ENCODE measurements at regions of chr7 and their contacts with region 1.

Region 1: DNA sequence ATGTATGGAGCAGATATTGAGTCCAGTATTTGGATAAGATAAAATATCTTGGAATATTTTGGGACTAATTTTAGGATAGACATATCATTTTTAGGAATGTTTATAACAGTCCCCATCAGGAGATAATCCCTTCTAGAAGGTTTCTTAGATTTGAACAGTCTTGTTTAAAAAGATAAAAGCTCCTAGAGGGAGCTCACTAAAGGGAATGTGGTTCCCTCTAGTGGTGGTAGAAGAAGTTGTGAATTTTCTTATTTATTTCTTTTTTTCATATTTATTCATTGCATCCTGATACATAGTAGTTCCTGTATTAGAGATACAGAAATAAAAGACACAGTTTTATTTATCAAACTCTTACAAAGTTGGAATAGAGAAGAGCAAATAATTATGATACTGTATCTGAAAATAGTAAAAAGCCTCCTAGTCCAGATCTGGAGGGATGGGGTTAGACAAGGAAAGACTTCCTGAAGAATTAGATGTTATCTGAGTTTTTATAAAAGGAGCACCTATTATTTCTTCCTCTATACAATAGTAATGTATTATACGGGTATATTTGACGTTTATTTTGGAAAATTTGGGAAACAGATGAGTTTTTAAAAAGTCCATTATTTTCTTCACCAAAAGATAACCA is 24.5 kb upstream of the KLF14 start:
- DNase-seq: no peak
- ATAC-seq: peak; percentile 40
- H3K4me3 Mint-ChIP-seq: no peak overlapping the region
- H3K27ac Mint-ChIP-seq: no peak overlapping the region
- H3K4me1 Mint-ChIP-seq: no peaks in the 10 kb centered on the region
- H3K27me3 Mint-ChIP-seq: peaks cover 3% of the 10 kb centered on the region
- CTCF ChIP-seq: peak; percentile 47

Region 2: GRCh38 chr7:130242198-130243014 is 516.1 kb before region 1 on chr7:
- CTCF ChIA-PET with region 1: interaction called, 5 read pairs
- POLR2A ChIA-PET with region 1: no interaction called
- intact Hi-C with region 1: loop called (anchors 1 kb)
- DNase-seq: no peak
- ATAC-seq: no peak
- H3K4me3 Mint-ChIP-seq: no peak overlapping the region
- H3K27ac Mint-ChIP-seq: no peak overlapping the region
- H3K4me1 Mint-ChIP-seq: peaks cover 9% of the 10 kb centered on the region
- H3K27me3 Mint-ChIP-seq: peaks cover 5% of the 10 kb centered on the region
- CTCF ChIP-seq: no peak

Region 3: GRCh38 chr7:130560970-130561369 is 197.6 kb before region 1 on chr7:
- CTCF ChIA-PET with region 1: no interaction called
- POLR2A ChIA-PET with region 1: no interaction called
- intact Hi-C with region 1: loop called (anchors 5 kb)
- DNase-seq: no peak
- ATAC-seq: peak; percentile 77
- H3K4me3 Mint-ChIP-seq: no peak overlapping the region
- H3K27ac Mint-ChIP-seq: no peak overlapping the region
- H3K4me1 Mint-ChIP-seq: peaks cover 4% of the 10 kb centered on the region
- H3K27me3 Mint-ChIP-seq: no peaks in the 10 kb centered on the region
- CTCF ChIP-seq: no peak

Region 4: DNA sequence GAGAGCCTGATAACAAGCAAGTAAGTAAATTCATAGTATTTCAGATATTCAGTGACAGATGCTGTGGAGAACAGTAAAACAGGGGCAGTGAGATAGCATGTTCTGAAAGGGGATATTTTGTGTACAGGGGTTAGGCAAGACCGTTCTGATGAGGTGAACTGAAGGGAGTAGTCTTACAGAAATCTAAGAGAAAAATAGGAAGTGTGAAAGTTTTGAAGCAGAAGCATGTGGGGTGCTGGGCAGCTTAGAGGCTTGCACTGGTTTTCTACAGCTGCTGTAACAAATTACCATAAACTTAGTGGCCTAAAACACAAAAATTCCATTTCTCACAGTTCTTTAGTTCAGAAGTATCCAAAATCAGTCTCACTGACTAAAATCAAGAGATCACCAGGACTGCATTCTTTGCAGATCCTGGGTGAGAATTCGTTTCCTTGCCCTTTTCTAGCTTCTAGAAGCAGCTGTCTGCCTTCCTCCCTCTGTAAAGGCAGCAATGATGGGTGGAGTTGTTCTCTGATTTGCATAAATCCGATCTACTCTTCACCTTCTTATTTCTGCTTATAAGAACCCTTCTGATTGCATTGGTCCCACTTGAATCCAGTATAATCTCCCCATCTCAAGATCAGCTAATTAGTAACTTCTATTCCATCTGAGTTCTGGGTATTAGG is 17.1 kb before region 1 on chr7:
- CTCF ChIA-PET with region 1: interaction called, 22 read pairs
- POLR2A ChIA-PET with region 1: interaction called, 7 read pairs
- intact Hi-C with region 1: no loop called
- DNase-seq: no peak
- ATAC-seq: peak; percentile 94
- H3K4me3 Mint-ChIP-seq: no peak overlapping the region
- H3K27ac Mint-ChIP-seq: no peak overlapping the region
- H3K4me1 Mint-ChIP-seq: no peaks in the 10 kb centered on the region
- H3K27me3 Mint-ChIP-seq: peaks cover 23% of the 10 kb centered on the region
- CTCF ChIP-seq: no peak

Measured in activated B cell treated with CpG ODN at 0.5 μM for 24 hours (primary cell).